Activated CD4-positive, alpha-beta memory T cell treated with anti-CD3 and anti-CD28 coated beads for 36 hours (primary cell): ENCODE measurements at regions of chr3 and their contacts with region 1.

Region 1: GRCh38 chr3:68089572-68090011 is 435.2 kb upstream of the SUCLG2 start:
- DNase-seq: no peak
- H3K4me3 Mint-ChIP-seq: no peak overlapping the region
- H3K27ac Mint-ChIP-seq: no peak overlapping the region
- H3K4me1 Mint-ChIP-seq: peaks cover 63% of the 10 kb centered on the region
- H3K27me3 Mint-ChIP-seq: no peaks in the 10 kb centered on the region

Region 2: GRCh38 chr3:68057637-68058320 is 31.8 kb before region 1 on chr3:
- CTCF ChIA-PET with region 1: no interaction called
- POLR2A ChIA-PET with region 1: no interaction called
- intact Hi-C with region 1: loop called (anchors 1 kb)
- DNase-seq: peak; percentile 78
- H3K4me3 Mint-ChIP-seq: peak overlapping the region; percentile 50
- H3K27ac Mint-ChIP-seq: peak overlapping the region; percentile 67
- H3K4me1 Mint-ChIP-seq: peaks cover 64% of the 10 kb centered on the region
- H3K27me3 Mint-ChIP-seq: no peaks in the 10 kb centered on the region

Region 3: DNA sequence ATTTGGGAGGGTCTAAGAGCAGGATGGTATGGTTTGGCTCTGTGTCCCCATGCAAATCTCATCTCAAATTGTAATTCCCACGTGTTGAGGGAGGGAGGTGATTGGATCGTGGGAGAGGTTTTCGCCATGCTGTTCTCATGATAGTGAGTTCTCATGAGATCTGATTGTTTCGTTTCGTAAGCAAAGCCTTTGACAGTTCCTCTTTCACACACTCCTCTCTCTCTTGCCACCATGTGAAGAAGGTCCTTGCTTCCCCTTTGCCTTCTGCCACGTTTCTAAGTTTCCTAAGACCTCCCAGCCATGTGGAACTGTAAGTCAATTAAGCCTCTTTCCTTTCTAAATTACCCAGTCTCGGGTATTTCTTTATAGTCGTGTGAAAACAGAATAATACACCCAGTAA is 289.0 kb after region 1 on chr3:
- CTCF ChIA-PET with region 1: no interaction called
- POLR2A ChIA-PET with region 1: no interaction called
- intact Hi-C with region 1: no loop called
- DNase-seq: no peak
- H3K4me3 Mint-ChIP-seq: no peak overlapping the region
- H3K27ac Mint-ChIP-seq: no peak overlapping the region
- H3K4me1 Mint-ChIP-seq: no peaks in the 10 kb centered on the region
- H3K27me3 Mint-ChIP-seq: no peaks in the 10 kb centered on the region